GM13977 (cell line): ENCODE measurements at regions of chr19 and their contacts with region 1.

Region 1: DNA sequence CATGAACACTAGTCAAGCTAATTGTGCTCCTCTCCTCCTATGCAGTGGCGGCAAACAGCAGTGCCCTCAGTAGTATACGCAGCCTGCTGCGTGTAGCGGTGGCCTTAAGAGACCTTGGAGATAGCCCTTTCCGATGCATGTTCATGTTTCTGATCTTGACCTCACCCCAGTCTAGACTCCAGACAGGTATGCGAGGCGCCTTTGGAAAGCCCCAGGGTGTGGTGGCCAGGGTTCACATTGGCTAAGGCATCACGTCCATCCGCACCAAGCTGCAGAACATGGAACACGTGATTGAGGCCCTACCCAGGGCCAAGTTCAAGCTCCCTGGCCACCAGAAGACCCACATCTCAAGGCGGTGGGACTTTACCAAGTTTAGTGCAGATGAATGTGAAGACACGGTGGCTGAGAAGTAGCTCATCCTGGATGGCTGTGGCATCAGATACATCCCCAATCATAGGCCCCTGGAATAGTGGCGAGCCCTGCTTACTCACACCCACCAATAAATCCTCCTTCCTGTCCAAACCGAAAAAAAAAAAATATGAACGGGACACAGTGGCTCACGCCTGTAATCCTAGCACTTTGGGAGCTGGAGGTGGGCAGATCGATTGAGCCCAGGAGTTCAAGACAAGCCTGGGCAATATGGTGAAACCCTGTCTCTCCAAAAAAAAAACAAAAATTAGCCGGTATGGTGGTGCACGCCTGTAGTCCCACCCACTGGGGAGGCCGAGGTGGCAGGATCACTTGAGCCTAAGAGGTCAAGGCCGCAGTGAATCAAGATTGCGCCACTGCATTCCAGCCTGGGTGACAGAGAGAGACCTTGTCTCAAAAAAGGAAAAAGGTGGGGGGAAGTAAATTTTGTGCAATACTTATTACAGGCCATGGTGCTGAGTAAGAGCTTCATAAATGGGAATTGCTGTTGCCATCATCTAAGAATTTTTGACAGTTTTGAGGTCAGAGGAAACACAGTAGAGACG is 12.4 kb upstream of the CBLC start:
- DNase-seq: no peak
- CTCF ChIP-seq: no peak

Region 2: DNA sequence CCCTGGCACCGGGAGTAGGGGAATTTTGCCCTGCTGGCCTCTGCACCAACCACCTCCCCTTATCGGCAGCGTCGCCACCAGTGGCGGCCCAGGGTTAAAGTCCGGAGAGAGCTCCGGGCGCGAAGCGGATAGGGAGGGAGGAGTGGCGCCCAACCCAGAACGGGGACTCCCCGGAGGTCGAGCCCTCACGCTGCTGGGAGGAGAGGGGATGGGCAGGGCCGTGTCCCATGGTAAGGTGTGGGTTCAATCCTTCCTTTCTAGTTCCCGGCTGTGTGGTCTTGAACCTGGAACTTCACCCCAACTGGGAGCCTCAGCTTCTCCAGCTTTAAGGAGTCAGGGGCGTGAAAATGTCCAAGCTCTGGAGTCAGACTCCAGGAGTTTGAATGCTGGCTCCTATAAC is 40.0 kb before region 1 on chr19:
- in situ Hi-C with region 1: loop called (anchors 5 kb)
- DNase-seq: no peak
- CTCF ChIP-seq: no peak